ENCODE measurements at regions of chr16 and their contacts with region 1.

Region 1: GRCh38 chr16:25298165-25298872 is 40.7 kb upstream of the ZKSCAN2 start:
- ATAC-seq: peak in 1 of 8 experiments; percentile 62
- H3K4me3 ChIP-seq: no peak overlapping the region
- H3K27ac ChIP-seq: no peak overlapping the region
- H3K4me1 ChIP-seq: no peaks in the 10 kb centered on the region

Region 2: GRCh38 chr16:24737391-24737871 is 560.9 kb before region 1 on chr16:
- in situ Hi-C with region 1: no loop called
- ATAC-seq: peak in 4 of 8 experiments; percentile 59 to 79 (median 68)
- H3K4me3 ChIP-seq: no peak overlapping the region
- H3K27ac ChIP-seq: no peak overlapping the region
- H3K4me1 ChIP-seq: peaks cover 0 to 2% of the 10 kb centered on the region in 2 donors

Region 3: GRCh38 chr16:27080870-27081269 is 1782.6 kb after region 1 on chr16:
- in situ Hi-C with region 1: loop called in 1 of 9 experiments (anchors 25 kb)
- ATAC-seq: peak in 3 of 8 experiments; percentile 57 to 68 (median 63)
- H3K4me3 ChIP-seq: no peak overlapping the region
- H3K27ac ChIP-seq: no peak overlapping the region
- H3K4me1 ChIP-seq: peaks cover 16 to 26% of the 10 kb centered on the region in 2 donors

Region 4: DNA sequence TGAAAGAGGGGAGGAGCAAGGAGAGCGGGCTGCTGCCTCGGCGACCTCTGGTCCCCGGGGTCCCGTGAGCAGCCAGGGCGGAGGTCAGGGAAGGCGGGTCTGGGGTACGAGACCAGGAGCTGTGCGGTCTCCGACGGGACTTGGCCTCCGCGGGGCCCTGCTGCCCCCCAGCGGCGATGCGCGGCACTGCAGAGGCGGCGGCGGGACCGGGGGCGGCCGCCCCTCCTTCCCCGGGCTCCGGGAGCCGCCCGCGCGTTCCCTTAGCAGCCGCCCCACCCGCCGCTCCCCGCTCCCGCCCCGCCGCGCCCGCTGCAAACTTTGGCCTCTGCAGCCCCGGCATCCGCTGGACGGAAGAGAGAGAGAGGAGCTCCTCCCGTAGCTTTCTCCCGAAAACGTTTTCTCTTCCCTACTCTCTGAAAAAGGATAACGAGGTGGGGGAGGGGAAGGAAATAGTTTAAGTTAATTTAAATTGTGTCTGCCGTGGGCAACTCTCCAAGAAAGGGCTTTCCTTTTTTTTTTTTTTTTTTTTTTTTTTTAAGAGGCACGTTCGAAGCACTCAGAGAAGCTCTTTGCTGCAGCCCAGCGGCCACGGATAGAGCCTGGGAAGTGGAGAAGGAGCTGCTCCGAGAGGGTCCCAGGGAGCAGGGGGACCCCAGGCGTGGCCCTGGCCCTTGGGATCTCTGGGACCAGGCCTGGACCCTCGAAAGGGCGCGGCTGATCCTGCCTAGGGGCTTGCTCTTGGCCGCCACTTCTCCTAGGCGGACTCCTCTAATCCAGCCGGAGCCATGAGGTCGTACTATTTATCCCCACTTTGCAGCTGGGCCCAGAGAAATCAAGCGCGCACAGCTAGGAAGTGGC is 1811.6 kb after region 1 on chr16:
- in situ Hi-C with region 1: loop called in 2 of 9 experiments (anchors 25 kb)
- ATAC-seq: peak; percentile 88 to 96 (median 93)
- H3K4me3 ChIP-seq: peak overlapping the region; percentile 36 to 40 (median 38)
- H3K27ac ChIP-seq: peak overlapping the region in 1 of 2 donors; percentile 59
- H3K4me1 ChIP-seq: peaks cover 0 to 8% of the 10 kb centered on the region in 2 donors